ENCODE measurements at regions of chr19 and their contacts with region 1.

Region 1: DNA sequence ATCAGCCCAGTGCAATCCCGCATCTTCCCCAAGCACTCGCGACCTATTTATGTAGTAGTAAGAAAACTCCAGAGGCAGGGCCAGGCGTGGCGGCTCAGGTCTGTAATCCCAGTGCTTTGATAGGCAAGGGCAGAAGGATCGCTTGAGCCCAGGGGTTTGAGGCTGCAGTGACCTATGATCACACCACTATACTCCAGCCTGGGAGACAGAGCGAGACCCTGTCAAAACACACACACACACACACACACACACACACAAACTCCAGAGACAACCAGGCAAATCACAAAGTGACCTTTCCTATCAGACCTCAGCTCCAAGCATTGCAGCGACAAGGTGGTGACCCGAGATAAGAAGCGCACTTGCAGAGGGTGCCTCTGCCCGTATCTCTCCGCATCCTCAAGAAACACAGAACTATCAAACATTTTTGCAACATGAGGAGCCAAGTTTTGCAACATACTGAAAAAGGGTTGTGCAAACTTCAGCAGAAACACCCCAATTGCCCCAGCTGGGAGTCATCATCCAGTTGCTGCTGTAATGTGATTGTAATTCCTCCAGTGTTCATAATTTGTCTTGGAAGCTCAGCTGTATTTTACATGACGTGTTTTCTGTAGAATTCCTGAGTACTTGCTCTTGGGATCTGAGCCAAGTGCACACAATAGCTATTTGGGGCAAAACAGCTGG is 8.7 kb upstream of the KLF2 start:
- DNase-seq: peak; percentile 30 to 77
- ATAC-seq: peak; percentile 64 to 85 (median 76)
- H3K4me3 ChIP-seq: no peak overlapping the region
- H3K27ac ChIP-seq: peak overlapping the region; percentile 14 to 90 (median 84)
- H3K4me1 ChIP-seq: peaks cover 7 to 61% (median 49%) of the 10 kb centered on the region in 9 donors
- H3K27me3 ChIP-seq: no peaks in the 10 kb centered on the region
- CTCF ChIP-seq: no peak

Region 2: GRCh38 chr19:16252459-16253205 is 63.3 kb before region 1 on chr19:
- intact Hi-C with region 1: loop called in 4 of 10 experiments (anchors 5 to 10 kb)
- DNase-seq: peak in 1 of 2 donors; percentile 41
- ATAC-seq: peak in 6 of 8 donors; percentile 11 to 47 (median 29)
- H3K4me3 ChIP-seq: no peak overlapping the region
- H3K27ac ChIP-seq: peak overlapping the region in 4 of 10 donors; percentile 4 to 64 (median 26)
- H3K4me1 ChIP-seq: peaks cover 0 to 32% (median 16%) of the 10 kb centered on the region in 9 donors
- H3K27me3 ChIP-seq: no peaks in the 10 kb centered on the region
- CTCF ChIP-seq: no peak

Region 3: DNA sequence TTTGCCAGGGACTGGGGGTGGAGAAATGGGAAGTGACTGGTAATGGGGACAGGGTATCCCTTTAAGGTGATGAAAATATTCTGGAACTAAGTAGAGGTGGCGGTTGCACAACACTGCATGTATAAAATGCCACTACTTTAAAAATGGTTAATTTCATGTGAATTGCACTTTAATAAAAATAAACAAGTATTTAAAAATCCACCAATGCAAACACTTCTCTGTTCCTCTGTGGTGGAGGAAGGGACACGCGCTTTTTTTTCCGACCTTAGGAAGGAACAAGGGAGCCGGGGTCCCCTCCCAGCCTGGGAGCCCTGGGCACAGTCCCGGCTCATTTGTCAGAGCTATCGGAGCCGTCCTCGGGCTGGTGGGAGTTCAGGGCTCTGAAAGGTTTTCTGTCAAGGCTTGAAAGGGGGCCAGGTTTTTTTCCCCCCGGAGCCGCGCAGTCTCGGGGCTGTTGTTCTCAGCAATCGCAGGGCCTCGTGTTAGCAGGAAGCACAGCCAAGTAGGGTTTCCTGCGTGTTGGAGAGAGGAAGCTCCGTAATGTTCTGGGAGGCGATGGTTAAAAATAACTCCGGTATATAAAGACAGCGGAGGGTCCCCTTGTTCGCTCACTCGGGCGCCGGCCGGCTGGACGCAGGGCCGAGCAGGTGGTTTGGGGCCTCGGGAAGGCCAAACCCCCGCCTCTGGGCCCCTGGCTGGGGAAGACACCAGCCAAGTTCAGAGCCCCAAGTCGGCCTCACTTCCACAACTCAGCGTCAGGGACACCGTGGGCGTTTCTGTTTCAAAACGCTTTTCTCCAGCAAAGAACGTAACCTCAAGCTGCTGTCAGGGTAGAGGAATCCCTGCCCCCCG is 32.5 kb before region 1 on chr19:
- intact Hi-C with region 1: loop called in 5 of 10 experiments (anchors 2 to 5 kb)
- DNase-seq: peak; percentile 81 to 94
- ATAC-seq: peak; percentile 88 to 94 (median 92)
- H3K4me3 ChIP-seq: peak overlapping the region in 8 of 10 donors; percentile 19 to 49 (median 38)
- H3K27ac ChIP-seq: peak overlapping the region; percentile 91 to 99 (median 98)
- H3K4me1 ChIP-seq: peaks cover 13 to 89% (median 57%) of the 10 kb centered on the region in 9 donors
- H3K27me3 ChIP-seq: no peaks in the 10 kb centered on the region
- CTCF ChIP-seq: no peak

Region 4: GRCh38 chr19:16293118-16294091 is 22.6 kb before region 1 on chr19:
- intact Hi-C with region 1: loop called in 5 of 10 experiments (anchors 1 to 5 kb)
- DNase-seq: peak; percentile 62 to 88
- ATAC-seq: peak; percentile 82 to 91 (median 88)
- H3K4me3 ChIP-seq: peak overlapping the region in 8 of 10 donors; percentile 2 to 41 (median 25)
- H3K27ac ChIP-seq: peak overlapping the region; percentile 73 to 99 (median 90)
- H3K4me1 ChIP-seq: peaks cover 6 to 57% (median 36%) of the 10 kb centered on the region in 9 donors
- H3K27me3 ChIP-seq: no peaks in the 10 kb centered on the region
- CTCF ChIP-seq: no peak

Region 5: GRCh38 chr19:16528073-16528472 is 212.1 kb after region 1 on chr19:
- intact Hi-C with region 1: no loop called
- DNase-seq: no peak
- ATAC-seq: no peak
- H3K4me3 ChIP-seq: no peak overlapping the region
- H3K27ac ChIP-seq: no peak overlapping the region
- H3K4me1 ChIP-seq: no peaks in the 10 kb centered on the region
- H3K27me3 ChIP-seq: no peaks in the 10 kb centered on the region
- CTCF ChIP-seq: peak in 3 of 9 donors; percentile 20 to 41 (median 25)